ENCODE measurements at regions of chr9 and their contacts with region 1.

Region 1: GRCh38 chr9:133035669-133036068 is 4.9 kb downstream of the GTF3C5 start:
- DNase-seq: no peak
- ATAC-seq: no peak

Region 2: GRCh38 chr9:131899296-131900228 is 1136.1 kb before region 1 on chr9:
- intact Hi-C with region 1: no loop called
- DNase-seq: no peak
- ATAC-seq: no peak

Region 3: GRCh38 chr9:132994410-132995120 is 41.1 kb before region 1 on chr9:
- intact Hi-C with region 1: no loop called
- DNase-seq: no peak
- ATAC-seq: no peak

Region 4: DNA sequence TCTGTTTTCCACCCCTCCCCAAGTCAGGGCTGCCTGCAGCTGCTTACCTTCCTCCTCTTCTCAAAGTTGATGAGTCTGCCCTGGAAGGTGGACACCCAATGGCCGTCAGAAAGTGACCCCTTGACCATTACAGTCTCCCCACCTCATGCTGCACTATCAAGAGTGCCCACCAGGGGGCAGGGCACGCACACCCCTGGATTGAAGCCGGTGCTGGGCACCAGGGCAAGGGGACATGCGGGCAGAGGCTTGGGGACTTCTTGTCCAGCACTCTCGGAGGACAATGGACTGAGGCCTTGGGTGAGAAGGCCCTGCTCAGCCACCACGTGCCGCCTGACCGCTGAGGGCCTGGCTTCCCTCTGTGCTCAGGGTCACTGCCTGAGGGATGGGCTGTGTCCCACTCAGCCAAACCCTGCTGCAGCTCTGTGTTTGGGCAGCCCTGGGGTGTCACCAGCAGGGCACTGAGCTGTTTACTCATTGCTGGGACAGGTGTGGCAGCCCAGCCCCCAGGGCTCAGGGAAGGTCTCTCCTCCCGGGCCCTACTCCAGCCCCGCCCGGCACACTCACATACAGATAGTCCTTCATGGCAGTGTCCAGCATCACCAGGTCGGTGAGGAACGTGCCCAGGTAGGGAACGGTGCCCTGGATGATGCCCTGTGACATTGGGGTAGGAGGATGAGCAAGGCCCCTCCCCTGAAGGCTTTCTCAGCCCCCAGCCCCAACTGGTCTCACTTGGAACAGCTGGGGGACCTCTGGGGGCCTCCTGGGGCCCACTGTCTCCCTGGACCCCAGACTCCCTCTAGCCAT is 67.7 kb after region 1 on chr9:
- intact Hi-C with region 1: loop called (anchors 5 kb)
- DNase-seq: peak; percentile 87
- ATAC-seq: peak; percentile 58